ENCODE measurements at regions of chr2 and their contacts with region 1.

Region 1: DNA sequence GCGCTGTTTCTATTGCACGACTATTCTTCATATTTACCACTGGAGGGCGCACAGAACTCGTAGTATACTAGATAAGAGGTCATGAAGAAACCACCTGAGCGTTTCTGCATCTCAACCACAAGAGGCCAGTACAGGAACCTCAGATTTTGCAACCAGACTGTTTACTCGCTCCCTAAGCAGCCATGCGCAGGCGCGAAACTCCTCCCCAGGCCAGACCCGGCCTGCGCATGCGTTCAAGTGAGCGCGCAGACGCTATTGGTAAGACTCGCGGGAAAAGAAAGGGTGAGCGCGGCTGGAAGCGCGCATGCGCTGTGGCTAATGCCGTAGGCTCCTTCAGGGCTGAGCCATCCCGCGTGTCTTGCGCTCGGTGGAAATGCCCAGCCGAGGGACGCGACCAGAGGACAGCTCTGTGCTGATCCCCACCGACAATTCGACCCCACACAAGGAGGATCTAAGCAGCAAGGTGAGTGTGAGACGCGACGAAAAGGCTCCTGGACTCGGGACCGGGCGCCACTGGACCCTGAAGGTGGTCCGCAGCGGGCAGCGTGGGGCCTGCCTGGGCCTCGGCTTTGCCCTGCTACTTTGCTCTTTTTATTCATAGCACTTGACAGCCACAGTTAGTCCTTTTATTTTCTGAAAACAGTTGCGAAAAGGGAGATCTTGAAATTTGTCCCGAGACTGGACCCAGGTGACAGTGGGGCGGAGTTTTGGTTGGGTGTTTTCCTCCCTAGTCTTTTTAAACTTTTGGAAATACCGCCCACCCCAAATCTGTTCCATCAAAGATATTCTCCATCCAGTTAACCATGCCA is at the start of gene ASNSD1:
- H3K4me3 Mint-ChIP-seq: no peak within 1 kb of the TSS
- H3K27ac Mint-ChIP-seq: no peak within 1 kb of the TSS
- H3K4me1 Mint-ChIP-seq: peaks cover 20% of the 10 kb centered on the region
- H3K27me3 Mint-ChIP-seq: no peaks in the 10 kb centered on the region

Region 2: GRCh38 chr2:189674374-189675112 is 13.2 kb after region 1 on chr2 and contains the start of gene ANKAR:
- intact Hi-C with region 1: loop called (anchors 1 kb)
- H3K4me3 Mint-ChIP-seq: peak within 1 kb of the TSS; percentile 83
- H3K27ac Mint-ChIP-seq: peak within 1 kb of the TSS; percentile 96
- H3K4me1 Mint-ChIP-seq: peaks cover 24% of the 10 kb centered on the region
- H3K27me3 Mint-ChIP-seq: no peaks in the 10 kb centered on the region

Region 3: GRCh38 chr2:189698020-189698887 is 36.9 kb after region 1 on chr2:
- intact Hi-C with region 1: loop called (anchors 1 kb)
- H3K4me3 Mint-ChIP-seq: no peak overlapping the region
- H3K27ac Mint-ChIP-seq: no peak overlapping the region
- H3K4me1 Mint-ChIP-seq: no peaks in the 10 kb centered on the region
- H3K27me3 Mint-ChIP-seq: no peaks in the 10 kb centered on the region

Region 4: GRCh38 chr2:189762551-189763298 is 101.4 kb after region 1 on chr2 and contains the start of gene OSGEPL1:
- intact Hi-C with region 1: loop called (anchors 5 kb)
- H3K4me3 Mint-ChIP-seq: peak within 1 kb of the TSS; percentile 83
- H3K27ac Mint-ChIP-seq: peak within 1 kb of the TSS; percentile 91
- H3K4me1 Mint-ChIP-seq: peaks cover 6% of the 10 kb centered on the region
- H3K27me3 Mint-ChIP-seq: no peaks in the 10 kb centered on the region

Region 5: DNA sequence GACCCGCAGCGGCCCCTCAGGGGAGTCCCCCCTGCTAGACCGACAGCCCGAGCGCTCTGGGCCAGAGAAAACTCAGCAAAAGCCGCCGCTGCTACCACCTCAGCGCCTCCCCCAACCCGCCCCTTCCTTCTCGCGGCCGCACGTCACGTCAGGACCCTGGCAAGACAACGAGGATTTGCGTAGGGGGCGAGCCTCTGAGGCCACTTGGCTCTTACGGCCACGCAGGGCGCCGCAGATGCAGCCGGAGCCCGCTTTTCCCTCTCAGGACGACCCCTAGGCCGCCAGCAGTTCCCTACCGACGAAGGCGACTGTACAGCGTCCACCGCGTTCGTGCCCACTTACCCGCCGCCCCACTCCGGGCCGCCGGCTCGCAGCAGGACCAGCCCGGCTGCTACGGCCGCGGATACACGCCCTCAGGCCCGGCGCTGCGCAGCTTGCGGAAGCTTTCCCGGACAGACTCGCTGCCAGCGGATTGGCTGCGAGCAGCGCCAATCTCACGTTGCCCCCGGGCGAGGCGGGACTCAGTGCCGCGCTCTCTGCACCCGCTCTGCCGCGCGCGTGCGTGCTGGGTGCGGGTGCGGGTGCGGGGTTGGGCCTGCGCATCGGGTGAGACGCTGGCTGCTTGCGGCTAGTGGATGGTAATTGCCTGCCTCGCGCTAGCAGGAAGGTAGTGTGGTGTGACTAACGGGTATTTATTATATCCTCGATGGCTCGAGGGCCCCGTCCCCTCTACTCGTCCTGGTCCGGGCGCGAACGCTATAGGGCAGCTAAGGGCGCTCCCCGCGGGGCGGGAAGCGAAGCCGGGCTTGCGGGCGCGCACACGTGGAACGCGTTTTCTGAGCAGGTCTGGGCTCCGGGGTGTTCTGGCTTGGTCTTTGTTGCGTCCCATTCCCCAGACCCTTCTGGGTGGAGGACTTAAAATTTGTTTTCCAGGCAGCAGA is 122.8 kb after region 1 on chr2 and contains the starts of genes ORMDL1 and PMS1:
- intact Hi-C with region 1: loop called (anchors 5 kb)
- H3K4me3 Mint-ChIP-seq: peak within 1 kb of the TSS; percentile 94
- H3K27ac Mint-ChIP-seq: peak within 1 kb of the TSS; percentile 94
- H3K4me1 Mint-ChIP-seq: peaks cover 54% of the 10 kb centered on the region
- H3K27me3 Mint-ChIP-seq: no peaks in the 10 kb centered on the region

Region 6: GRCh38 chr2:190069936-190070696 is 408.8 kb after region 1 on chr2:
- intact Hi-C with region 1: loop called (anchors 2 kb)
- H3K4me3 Mint-ChIP-seq: no peak overlapping the region
- H3K27ac Mint-ChIP-seq: no peak overlapping the region
- H3K4me1 Mint-ChIP-seq: no peaks in the 10 kb centered on the region
- H3K27me3 Mint-ChIP-seq: no peaks in the 10 kb centered on the region

Region 7: DNA sequence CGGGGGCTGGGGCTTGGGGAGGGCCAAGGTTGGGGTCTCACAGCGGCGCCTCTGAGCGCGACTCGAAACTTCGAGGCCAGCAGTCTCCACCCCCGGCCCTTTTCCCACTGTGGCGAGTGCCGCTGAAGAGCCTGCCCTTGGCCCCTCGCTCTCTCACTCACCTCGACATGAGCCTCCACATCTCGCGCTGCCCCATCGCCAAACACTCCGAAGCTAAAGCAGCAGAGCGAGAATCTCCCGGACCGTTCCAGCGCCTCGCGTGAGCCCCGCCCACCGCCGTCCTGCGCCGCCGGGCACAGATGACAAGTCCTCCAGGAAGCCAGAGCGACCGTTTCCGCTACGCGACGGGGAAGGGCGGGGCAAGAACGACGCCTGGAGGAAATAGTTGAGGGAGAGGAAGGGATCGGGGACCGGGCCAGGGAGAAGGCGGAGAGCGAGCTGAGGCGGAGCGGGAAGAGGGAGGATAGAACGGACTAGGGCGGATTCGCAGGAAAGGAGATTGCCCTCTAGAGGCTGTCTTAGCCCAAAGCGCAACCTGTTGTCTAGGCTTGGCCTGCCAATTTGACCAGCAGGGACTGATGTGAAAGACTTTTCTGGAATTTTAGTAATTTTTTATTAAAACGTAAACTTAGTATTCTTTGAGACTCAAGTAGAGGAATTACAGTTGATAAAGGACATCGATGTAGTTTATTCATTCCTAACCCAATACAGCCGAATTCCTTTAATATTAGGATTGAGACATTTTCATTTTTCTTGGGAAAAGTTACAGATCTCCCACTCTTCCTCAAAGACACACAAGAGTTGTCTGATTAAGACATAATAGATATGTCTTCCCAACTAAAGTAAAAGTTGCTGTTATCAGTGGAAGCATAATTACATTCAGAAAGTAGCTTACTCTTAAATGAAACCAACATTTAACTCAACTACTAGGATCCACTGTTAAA is 658.5 kb after region 1 on chr2 and contains the start of gene HIBCH:
- intact Hi-C with region 1: loop called (anchors 5 kb)
- H3K4me3 Mint-ChIP-seq: peak within 1 kb of the TSS; percentile 82
- H3K27ac Mint-ChIP-seq: peak within 1 kb of the TSS; percentile 80
- H3K4me1 Mint-ChIP-seq: peaks cover 15% of the 10 kb centered on the region
- H3K27me3 Mint-ChIP-seq: no peaks in the 10 kb centered on the region